WTC11 (cell line): ENCODE measurements at regions of chr5 and their contacts with region 1.

Region 1: DNA sequence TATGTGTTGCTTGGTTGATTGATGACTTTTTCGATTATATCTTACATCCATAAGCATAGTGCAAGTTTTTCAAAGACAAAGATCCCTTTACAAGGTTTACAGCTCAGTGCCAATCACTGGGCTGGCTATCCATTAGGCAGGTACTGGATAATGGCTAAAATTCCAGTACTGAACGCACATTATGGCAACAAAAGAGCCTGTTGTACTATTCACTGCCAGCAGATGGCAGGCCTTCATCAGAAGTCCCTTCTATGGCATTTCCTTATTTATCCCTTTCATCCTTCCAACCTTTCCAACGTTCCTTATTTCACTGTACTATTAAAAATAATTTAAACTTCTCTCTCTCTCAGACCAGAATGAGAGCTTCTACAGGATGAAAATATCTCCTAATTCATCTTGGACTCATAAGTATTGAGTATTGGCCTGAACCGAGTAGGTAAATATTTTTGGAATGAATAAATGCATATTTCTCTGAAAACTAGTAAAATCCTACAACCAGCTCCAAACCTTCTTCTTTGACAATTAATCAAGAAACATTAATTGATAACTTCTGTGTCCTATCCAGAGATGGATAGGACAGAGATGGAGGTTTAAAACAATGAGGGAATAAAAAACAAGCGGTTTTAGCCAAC is 6.7 kb upstream of the WNT8A start:
- DNase-seq: peak; percentile 74
- ATAC-seq: peak; percentile 68
- H3K4me3 Mint-ChIP-seq: no peak overlapping the region
- H3K27ac Mint-ChIP-seq: no peak overlapping the region
- H3K4me1 Mint-ChIP-seq: peaks cover 20% of the 10 kb centered on the region
- H3K27me3 Mint-ChIP-seq: peaks cover 14% of the 10 kb centered on the region
- CTCF ChIP-seq: peak; percentile 69

Region 2: DNA sequence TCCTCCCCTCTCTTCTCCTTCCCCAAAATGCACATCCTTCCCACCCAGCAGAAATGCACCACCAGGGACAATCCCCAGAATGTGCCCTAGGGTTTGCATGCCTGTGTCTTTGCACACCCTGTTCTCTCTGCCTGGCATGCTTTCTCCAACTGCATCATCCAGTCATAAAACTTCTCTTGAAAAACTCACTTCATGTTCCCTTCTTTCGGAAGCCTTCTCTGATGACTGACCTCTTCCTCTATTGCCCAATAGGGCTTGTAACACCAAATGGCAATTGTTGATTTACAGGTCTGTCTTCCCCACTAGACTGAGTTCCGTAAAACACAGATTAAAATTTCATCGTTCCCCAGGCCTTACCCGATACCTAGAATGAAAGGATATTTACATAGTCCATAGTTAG is 495.0 kb before region 1 on chr5:
- CTCF ChIA-PET with region 1: no interaction called
- POLR2A ChIA-PET with region 1: no interaction called
- DNase-seq: no peak
- ATAC-seq: no peak
- H3K4me3 Mint-ChIP-seq: no peak overlapping the region
- H3K27ac Mint-ChIP-seq: no peak overlapping the region; the same call in 1 of the 2 replicates
- H3K4me1 Mint-ChIP-seq: no peaks in the 10 kb centered on the region
- H3K27me3 Mint-ChIP-seq: peaks cover 3% of the 10 kb centered on the region
- CTCF ChIP-seq: no peak

Region 3: GRCh38 chr5:138035605-138036537 is 41.3 kb before region 1 on chr5:
- CTCF ChIA-PET with region 1: interaction called, 18 read pairs
- POLR2A ChIA-PET with region 1: interaction called, 3 read pairs
- DNase-seq: peak; percentile 62
- ATAC-seq: peak; percentile 57
- H3K4me3 Mint-ChIP-seq: no peak overlapping the region
- H3K27ac Mint-ChIP-seq: no peak overlapping the region
- H3K4me1 Mint-ChIP-seq: peaks cover 25% of the 10 kb centered on the region
- H3K27me3 Mint-ChIP-seq: no peaks in the 10 kb centered on the region
- CTCF ChIP-seq: peak; percentile 59

Region 4: DNA sequence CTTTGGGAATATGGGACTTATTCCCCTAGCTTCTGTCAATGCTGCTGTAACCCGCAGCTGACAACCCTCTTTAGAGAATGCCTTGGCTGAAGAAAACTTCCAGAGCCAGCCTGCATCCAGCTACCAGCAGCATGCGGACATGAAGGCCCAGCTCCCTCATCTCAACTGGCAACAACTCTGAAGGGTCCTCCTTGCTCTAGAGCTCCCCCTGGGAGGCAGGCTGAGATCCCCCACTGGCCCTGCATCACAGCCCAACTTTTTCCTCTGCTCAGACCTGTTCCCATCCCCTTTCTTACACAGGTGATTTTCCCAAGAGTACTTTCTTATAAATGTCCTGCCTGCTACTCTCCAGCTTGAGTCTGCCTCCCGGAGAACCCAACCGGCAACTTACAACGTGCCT is 12.1 kb before region 1 on chr5:
- CTCF ChIA-PET with region 1: interaction called, 17 read pairs
- POLR2A ChIA-PET with region 1: no interaction called
- DNase-seq: peak; percentile 66
- ATAC-seq: peak; percentile 91
- H3K4me3 Mint-ChIP-seq: no peak overlapping the region
- H3K27ac Mint-ChIP-seq: no peak overlapping the region
- H3K4me1 Mint-ChIP-seq: peaks cover 2% of the 10 kb centered on the region; the same call in 1 of the 2 replicates
- H3K27me3 Mint-ChIP-seq: peaks cover 4% of the 10 kb centered on the region; the same call in 1 of the 2 replicates
- CTCF ChIP-seq: peak; percentile 31; the same call in 1 of the 2 replicates

Region 5: DNA sequence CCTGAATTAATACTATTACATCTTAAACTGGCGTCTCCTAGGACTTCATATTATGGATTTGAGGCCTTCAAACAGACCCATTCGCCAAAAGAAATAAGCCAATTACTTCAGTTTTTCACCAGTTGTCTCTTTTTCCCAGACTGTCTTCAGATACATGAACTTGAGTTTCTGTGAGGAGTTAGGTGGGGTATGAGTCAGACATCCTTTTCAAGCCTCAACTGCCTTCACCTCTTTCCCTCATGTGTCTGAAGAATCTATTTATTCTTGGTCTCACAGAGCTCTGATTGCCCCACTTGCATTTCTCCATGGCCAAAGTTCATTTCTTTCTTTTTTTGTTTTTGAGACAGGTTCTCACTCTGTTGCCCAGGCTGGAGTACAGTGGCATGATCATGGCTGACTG is 19.2 kb after region 1 on chr5:
- CTCF ChIA-PET with region 1: interaction called, 26 read pairs
- POLR2A ChIA-PET with region 1: no interaction called
- DNase-seq: no peak
- ATAC-seq: no peak
- H3K4me3 Mint-ChIP-seq: peak overlapping the region; percentile 12; the same call in 1 of the 2 replicates
- H3K27ac Mint-ChIP-seq: no peak overlapping the region
- H3K4me1 Mint-ChIP-seq: peaks cover 68% of the 10 kb centered on the region
- H3K27me3 Mint-ChIP-seq: peaks cover 100% of the 10 kb centered on the region
- CTCF ChIP-seq: no peak

Region 6: GRCh38 chr5:138102454-138103318 is 25.5 kb after region 1 on chr5:
- CTCF ChIA-PET with region 1: interaction called, 26 read pairs
- POLR2A ChIA-PET with region 1: no interaction called
- DNase-seq: no peak
- ATAC-seq: peak; percentile 36
- H3K4me3 Mint-ChIP-seq: no peak overlapping the region
- H3K27ac Mint-ChIP-seq: no peak overlapping the region
- H3K4me1 Mint-ChIP-seq: peaks cover 21% of the 10 kb centered on the region
- H3K27me3 Mint-ChIP-seq: peaks cover 79% of the 10 kb centered on the region
- CTCF ChIP-seq: no peak

Region 7: GRCh38 chr5:138110266-138110963 is 33.2 kb after region 1 on chr5:
- CTCF ChIA-PET with region 1: interaction called, 20 read pairs
- POLR2A ChIA-PET with region 1: no interaction called
- DNase-seq: peak; percentile 21
- ATAC-seq: peak; percentile 46; the same call in 1 of the 2 replicates
- H3K4me3 Mint-ChIP-seq: no peak overlapping the region
- H3K27ac Mint-ChIP-seq: no peak overlapping the region
- H3K4me1 Mint-ChIP-seq: peaks cover 14% of the 10 kb centered on the region
- H3K27me3 Mint-ChIP-seq: peaks cover 14% of the 10 kb centered on the region
- CTCF ChIP-seq: no peak

Region 8: DNA sequence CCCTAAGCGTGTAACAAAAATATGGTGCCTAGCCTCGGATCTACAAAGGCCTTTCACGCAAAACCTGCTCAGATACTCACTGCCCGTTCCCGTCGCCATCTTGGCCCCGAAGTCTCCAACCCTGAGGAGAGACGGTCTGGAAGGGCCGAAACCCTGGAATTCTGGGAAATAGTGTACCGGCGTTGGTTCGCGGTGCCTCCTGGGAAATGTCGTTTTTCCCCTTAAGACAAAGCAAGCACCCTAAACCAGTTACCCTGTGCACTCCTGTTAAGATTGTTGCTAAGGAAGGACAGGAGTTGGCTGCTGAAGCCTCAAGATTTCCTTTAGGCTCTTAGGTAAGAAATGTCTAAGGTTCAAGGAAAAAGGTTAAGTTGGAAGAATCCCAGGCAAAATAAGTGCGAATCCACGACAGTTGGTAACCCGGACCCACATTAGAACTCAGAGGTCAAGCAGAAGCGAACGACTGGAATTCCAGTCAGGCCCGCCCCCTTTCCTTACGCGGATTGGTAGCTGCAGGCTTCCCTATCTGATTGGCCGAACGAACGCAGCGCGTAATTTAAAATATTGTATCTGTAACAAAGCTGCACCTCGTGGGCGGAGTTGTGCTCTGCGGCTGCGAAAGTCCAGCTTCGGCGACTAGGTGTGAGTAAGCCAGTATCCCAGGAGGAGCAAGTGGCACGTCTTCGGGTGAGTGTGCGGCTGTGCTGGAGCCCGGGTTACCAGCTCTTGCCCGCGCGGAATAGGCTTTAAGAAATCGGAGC is 101.5 kb after region 1 on chr5 and contains the starts of genes BRD8 and KIF20A:
- CTCF ChIA-PET with region 1: no interaction called
- POLR2A ChIA-PET with region 1: no interaction called
- DNase-seq: peak; percentile 96
- ATAC-seq: peak; percentile 92
- H3K4me3 Mint-ChIP-seq: no peak within 1 kb of the TSS
- H3K27ac Mint-ChIP-seq: peak within 1 kb of the TSS; percentile 63; the same call in 1 of the 2 replicates
- H3K4me1 Mint-ChIP-seq: peaks cover 13% of the 10 kb centered on the region
- H3K27me3 Mint-ChIP-seq: no peaks in the 10 kb centered on the region
- CTCF ChIP-seq: no peak
- total RNA-seq, gene BRD8: 59.6 to 73.4 TPM (median 61.4 TPM) in 3 replicates
- total RNA-seq, gene KIF20A: 66.9 to 81.9 TPM (median 68.0 TPM) in 3 replicates